ENCODE measurements at regions of chr7 and their contacts with region 1.

Region 1: DNA sequence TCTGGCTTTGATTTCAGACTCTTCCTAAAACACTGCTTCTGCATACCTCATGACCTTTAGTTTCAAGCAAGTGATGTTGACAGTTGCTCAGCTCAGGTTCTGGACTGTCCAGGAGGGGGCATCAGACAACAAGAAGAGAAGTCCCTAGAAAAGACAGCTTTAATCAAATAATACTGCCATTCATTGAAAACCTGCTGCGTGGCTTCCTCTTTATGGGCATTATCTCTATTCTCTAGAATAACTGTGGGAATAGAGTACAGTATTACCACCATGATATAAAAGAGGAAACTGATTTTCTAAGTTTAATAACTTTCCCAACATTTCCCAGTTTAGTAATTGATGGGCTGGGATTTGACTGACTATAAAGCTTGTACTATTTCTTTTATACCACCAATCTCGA is 170.4 kb downstream of the SNX13 start:
- DNase-seq: peak; percentile 73
- ATAC-seq: peak; percentile 79
- H3K4me3 Mint-ChIP-seq: no peak overlapping the region
- H3K27ac Mint-ChIP-seq: no peak overlapping the region
- H3K4me1 Mint-ChIP-seq: peaks cover 5% of the 10 kb centered on the region
- H3K27me3 Mint-ChIP-seq: no peaks in the 10 kb centered on the region

Region 2: GRCh38 chr7:17680943-17681351 is 89.0 kb before region 1 on chr7:
- CTCF ChIA-PET with region 1: interaction called, 14 read pairs
- POLR2A ChIA-PET with region 1: no interaction called
- DNase-seq: no peak
- ATAC-seq: no peak
- H3K4me3 Mint-ChIP-seq: no peak overlapping the region
- H3K27ac Mint-ChIP-seq: no peak overlapping the region
- H3K4me1 Mint-ChIP-seq: no peaks in the 10 kb centered on the region
- H3K27me3 Mint-ChIP-seq: peaks cover 4% of the 10 kb centered on the region

Region 3: GRCh38 chr7:17706734-17707133 is 63.2 kb before region 1 on chr7:
- CTCF ChIA-PET with region 1: interaction called, 14 read pairs
- POLR2A ChIA-PET with region 1: no interaction called
- DNase-seq: peak; percentile 44
- ATAC-seq: peak; percentile 61
- H3K4me3 Mint-ChIP-seq: no peak overlapping the region
- H3K27ac Mint-ChIP-seq: no peak overlapping the region
- H3K4me1 Mint-ChIP-seq: no peaks in the 10 kb centered on the region
- H3K27me3 Mint-ChIP-seq: peaks cover 14% of the 10 kb centered on the region

Region 4: GRCh38 chr7:17863095-17863808 is 93.3 kb after region 1 on chr7:
- CTCF ChIA-PET with region 1: interaction called, 11 read pairs
- POLR2A ChIA-PET with region 1: no interaction called
- DNase-seq: no peak
- ATAC-seq: no peak
- H3K4me3 Mint-ChIP-seq: no peak overlapping the region
- H3K27ac Mint-ChIP-seq: no peak overlapping the region
- H3K4me1 Mint-ChIP-seq: peaks cover 1% of the 10 kb centered on the region
- H3K27me3 Mint-ChIP-seq: no peaks in the 10 kb centered on the region

Region 5: GRCh38 chr7:17917842-17918241 is 147.9 kb after region 1 on chr7:
- CTCF ChIA-PET with region 1: no interaction called
- POLR2A ChIA-PET with region 1: no interaction called
- DNase-seq: no peak
- ATAC-seq: no peak
- H3K4me3 Mint-ChIP-seq: no peak overlapping the region
- H3K27ac Mint-ChIP-seq: no peak overlapping the region
- H3K4me1 Mint-ChIP-seq: peaks cover 8% of the 10 kb centered on the region
- H3K27me3 Mint-ChIP-seq: no peaks in the 10 kb centered on the region

Region 6: DNA sequence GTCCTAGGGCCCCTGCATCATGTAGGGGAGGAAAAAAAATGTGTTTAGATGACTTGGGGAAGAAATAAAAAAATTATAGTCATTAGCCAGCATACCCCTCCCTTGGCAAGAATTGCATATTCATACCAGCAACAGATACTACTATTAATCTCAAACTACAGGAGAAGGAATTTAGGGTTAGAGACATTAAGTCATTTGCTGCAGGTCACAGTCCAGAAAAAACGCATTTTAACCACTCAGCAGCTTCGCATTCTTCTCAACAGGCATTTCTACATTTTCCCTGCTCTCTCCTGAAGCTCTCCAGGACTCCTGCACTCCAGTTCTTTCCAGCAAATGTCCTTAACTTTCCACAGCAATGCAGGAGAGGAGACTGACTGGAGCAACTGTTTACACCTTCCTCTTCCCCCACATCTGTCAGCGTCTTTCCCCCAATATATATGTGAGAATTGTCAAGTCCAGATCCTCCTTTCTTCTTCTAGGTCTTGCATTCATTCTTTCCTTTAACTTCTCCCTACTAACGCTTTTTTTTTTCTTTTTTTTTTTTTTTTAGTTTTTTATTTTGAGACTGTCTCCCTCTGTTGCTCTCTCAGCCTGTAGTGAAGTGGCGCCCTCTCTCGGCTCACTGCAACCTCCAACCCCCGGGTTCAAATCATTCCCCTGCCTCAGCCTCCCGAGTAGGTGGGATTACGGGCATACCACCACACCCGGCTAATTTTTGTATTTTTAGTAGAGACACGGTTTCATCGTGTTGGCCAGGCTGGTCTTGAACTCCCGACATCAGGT is 222.1 kb after region 1 on chr7:
- CTCF ChIA-PET with region 1: interaction called, 35 read pairs
- POLR2A ChIA-PET with region 1: no interaction called
- DNase-seq: peak; percentile 22
- ATAC-seq: no peak
- H3K4me3 Mint-ChIP-seq: no peak overlapping the region
- H3K27ac Mint-ChIP-seq: no peak overlapping the region
- H3K4me1 Mint-ChIP-seq: no peaks in the 10 kb centered on the region
- H3K27me3 Mint-ChIP-seq: peaks cover 3% of the 10 kb centered on the region

Region 7: GRCh38 chr7:18320971-18321567 is 551.2 kb after region 1 on chr7:
- CTCF ChIA-PET with region 1: interaction called, 11 read pairs
- POLR2A ChIA-PET with region 1: no interaction called
- DNase-seq: no peak
- ATAC-seq: no peak
- H3K4me3 Mint-ChIP-seq: no peak overlapping the region
- H3K27ac Mint-ChIP-seq: no peak overlapping the region
- H3K4me1 Mint-ChIP-seq: no peaks in the 10 kb centered on the region
- H3K27me3 Mint-ChIP-seq: peaks cover 3% of the 10 kb centered on the region

Region 8: GRCh38 chr7:18345641-18346234 is 575.8 kb after region 1 on chr7:
- CTCF ChIA-PET with region 1: interaction called, 11 read pairs
- POLR2A ChIA-PET with region 1: no interaction called
- DNase-seq: peak; percentile 34
- ATAC-seq: no peak
- H3K4me3 Mint-ChIP-seq: no peak overlapping the region
- H3K27ac Mint-ChIP-seq: no peak overlapping the region
- H3K4me1 Mint-ChIP-seq: no peaks in the 10 kb centered on the region
- H3K27me3 Mint-ChIP-seq: peaks cover 4% of the 10 kb centered on the region

Measured in activated CD8-positive, alpha-beta T cell treated with anti-CD3 and anti-CD28 coated beads, Interleukin-2, amount 10 ng/mL, durations not matched to agents 7 days and 5 days (primary cell).